ENCODE measurements at regions of chr7 and their contacts with region 1.

Region 1: GRCh38 chr7:150448789-150449147 is 1.7 kb upstream of the GIMAP8 start:
- DNase-seq: peak; percentile 94
- H3K4me3 Mint-ChIP-seq: peak overlapping the region; percentile 97
- H3K27ac Mint-ChIP-seq: peak overlapping the region; percentile 98
- H3K4me1 Mint-ChIP-seq: peaks cover 48% of the 10 kb centered on the region
- H3K27me3 Mint-ChIP-seq: no peaks in the 10 kb centered on the region

Region 2: GRCh38 chr7:150502519-150502918 is 53.8 kb after region 1 on chr7:
- CTCF ChIA-PET with region 1: interaction called, 12 read pairs
- POLR2A ChIA-PET with region 1: interaction called, 19 read pairs
- intact Hi-C with region 1: loop called (anchors 2 kb)
- DNase-seq: peak; percentile 62
- H3K4me3 Mint-ChIP-seq: peak overlapping the region; percentile 36
- H3K27ac Mint-ChIP-seq: peak overlapping the region; percentile 98
- H3K4me1 Mint-ChIP-seq: peaks cover 82% of the 10 kb centered on the region
- H3K27me3 Mint-ChIP-seq: no peaks in the 10 kb centered on the region

Region 3: DNA sequence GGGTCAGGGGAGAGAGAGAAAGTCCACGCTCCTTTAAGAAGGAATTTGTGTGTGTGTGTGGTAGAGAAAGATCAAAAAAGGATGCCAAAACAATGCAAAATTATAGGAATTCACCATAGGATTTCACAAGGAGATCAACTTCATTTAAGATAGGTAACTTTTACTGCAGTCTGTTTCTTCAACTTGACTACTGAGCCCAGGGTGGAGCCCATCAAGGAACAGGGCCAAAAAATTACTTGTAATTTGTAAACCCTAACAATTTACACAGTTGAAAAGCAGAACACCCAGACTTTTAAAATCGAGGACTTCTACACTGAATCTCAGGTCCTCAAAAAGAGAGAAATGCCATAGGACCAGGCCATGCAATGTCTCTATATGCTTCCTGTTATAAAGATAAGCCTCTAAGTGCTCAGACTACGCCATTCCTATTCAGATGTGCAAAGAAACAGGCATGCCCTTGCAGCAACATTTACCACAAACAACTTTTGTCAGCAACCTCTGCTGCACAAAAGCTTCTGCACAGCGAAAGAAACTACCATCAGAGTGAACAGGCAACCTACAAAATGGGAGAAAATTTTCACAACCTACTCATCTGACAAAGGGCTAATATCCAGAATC is 107.9 kb after region 1 on chr7:
- CTCF ChIA-PET with region 1: interaction called, 10 read pairs
- POLR2A ChIA-PET with region 1: interaction called, 3 read pairs
- intact Hi-C with region 1: no loop called
- DNase-seq: no peak
- H3K4me3 Mint-ChIP-seq: peak overlapping the region; percentile 58
- H3K27ac Mint-ChIP-seq: peak overlapping the region; percentile 83
- H3K4me1 Mint-ChIP-seq: peaks cover 78% of the 10 kb centered on the region
- H3K27me3 Mint-ChIP-seq: no peaks in the 10 kb centered on the region

Region 4: DNA sequence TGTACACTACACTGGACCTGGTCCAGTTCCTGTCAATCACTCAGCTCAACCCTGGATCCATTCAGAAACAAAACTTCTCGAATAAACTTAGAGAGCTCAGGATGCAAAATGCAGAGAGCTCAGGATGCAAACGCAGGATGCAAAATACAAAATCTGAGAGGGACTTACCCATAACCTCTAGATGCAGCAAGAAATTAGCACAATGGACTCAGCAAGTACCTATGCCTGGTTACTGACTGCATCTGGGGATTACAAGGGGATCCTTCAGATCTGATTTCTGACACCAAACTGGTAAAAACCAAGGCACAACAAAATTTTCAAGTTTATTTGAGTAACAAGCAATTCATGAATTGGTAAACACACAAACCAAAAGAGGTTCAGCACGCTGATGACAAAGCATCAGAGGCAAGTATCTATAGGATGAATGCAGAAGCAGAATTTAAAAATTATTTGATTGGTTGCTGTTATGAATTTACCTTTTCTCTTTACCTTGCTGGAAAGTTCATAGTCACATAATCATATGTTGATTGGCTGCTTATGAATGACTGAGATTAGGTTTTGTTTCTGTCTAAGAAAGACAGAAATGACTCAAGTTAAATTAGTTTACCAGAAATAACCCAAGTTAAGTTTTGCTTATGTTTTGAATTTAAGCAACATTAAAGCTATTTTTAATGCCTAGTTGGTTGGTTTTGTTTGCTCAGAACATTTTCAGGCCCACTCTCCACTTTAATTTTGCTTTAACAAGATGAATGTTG is 172.0 kb after region 1 on chr7:
- CTCF ChIA-PET with region 1: interaction called, 6 read pairs
- POLR2A ChIA-PET with region 1: no interaction called
- intact Hi-C with region 1: loop called (anchors 2 kb)
- DNase-seq: no peak
- H3K4me3 Mint-ChIP-seq: peak overlapping the region; percentile 29
- H3K27ac Mint-ChIP-seq: peak overlapping the region; percentile 95
- H3K4me1 Mint-ChIP-seq: peaks cover 56% of the 10 kb centered on the region
- H3K27me3 Mint-ChIP-seq: no peaks in the 10 kb centered on the region

Region 5: DNA sequence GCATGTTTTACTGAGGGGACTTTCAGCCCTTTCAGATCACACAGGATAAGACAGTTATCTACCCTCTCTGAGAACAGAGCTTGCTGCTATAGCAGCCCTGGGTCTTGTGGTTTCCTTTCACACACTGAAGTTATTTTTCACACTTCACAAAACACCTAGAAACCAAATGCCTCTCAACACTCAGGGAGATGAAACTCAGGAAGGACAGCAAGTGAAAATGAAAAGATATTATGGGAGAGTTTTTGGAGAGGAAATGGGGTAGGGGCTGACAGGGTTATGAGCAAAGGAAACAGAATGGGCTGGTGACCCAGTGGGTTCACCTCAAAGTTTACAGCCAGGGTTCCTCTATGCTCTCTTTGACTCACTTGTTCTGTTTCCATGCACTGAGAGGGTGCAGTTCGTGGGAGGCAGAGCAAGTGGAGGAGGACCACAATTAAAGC is 219.7 kb after region 1 on chr7:
- CTCF ChIA-PET with region 1: interaction called, 8 read pairs
- POLR2A ChIA-PET with region 1: interaction called, 3 read pairs
- intact Hi-C with region 1: loop called (anchors 1 kb)
- DNase-seq: peak; percentile 81
- H3K4me3 Mint-ChIP-seq: peak overlapping the region; percentile 18
- H3K27ac Mint-ChIP-seq: peak overlapping the region; percentile 98
- H3K4me1 Mint-ChIP-seq: peaks cover 82% of the 10 kb centered on the region
- H3K27me3 Mint-ChIP-seq: no peaks in the 10 kb centered on the region

Region 6: GRCh38 chr7:150716368-150716767 is 267.6 kb after region 1 on chr7 and contains the start of gene GIMAP1:
- CTCF ChIA-PET with region 1: interaction called, 14 read pairs
- POLR2A ChIA-PET with region 1: interaction called, 8 read pairs
- intact Hi-C with region 1: no loop called
- DNase-seq: peak; percentile 78
- H3K4me3 Mint-ChIP-seq: peak within 1 kb of the TSS; percentile 96
- H3K27ac Mint-ChIP-seq: peak within 1 kb of the TSS; percentile 92
- H3K4me1 Mint-ChIP-seq: peaks cover 50% of the 10 kb centered on the region
- H3K27me3 Mint-ChIP-seq: no peaks in the 10 kb centered on the region
- total RNA-seq, gene GIMAP1: 6.0 to 6.2 TPM

Region 7: DNA sequence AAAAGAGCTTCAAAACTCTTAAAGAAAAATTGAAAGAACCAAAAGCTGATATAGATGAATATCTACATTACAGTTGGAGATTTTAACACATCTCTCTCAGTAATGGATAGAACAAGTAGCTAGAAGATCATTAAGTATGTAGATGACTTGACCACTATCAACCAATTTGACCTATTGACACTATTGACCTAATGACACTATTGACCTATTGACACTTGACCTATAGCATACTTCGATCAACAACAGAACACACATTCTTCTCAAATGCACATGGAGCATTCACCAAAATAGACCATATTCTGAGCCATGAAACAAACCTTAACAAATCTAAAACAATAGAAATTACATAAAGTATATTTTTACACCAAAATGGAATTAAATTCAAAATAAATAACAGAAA is 310.7 kb after region 1 on chr7:
- CTCF ChIA-PET with region 1: interaction called, 80 read pairs
- POLR2A ChIA-PET with region 1: interaction called, 15 read pairs
- intact Hi-C with region 1: loop called (anchors 1 kb)
- DNase-seq: no peak
- H3K4me3 Mint-ChIP-seq: no peak overlapping the region
- H3K27ac Mint-ChIP-seq: no peak overlapping the region
- H3K4me1 Mint-ChIP-seq: peaks cover 31% of the 10 kb centered on the region
- H3K27me3 Mint-ChIP-seq: no peaks in the 10 kb centered on the region

Region 8: DNA sequence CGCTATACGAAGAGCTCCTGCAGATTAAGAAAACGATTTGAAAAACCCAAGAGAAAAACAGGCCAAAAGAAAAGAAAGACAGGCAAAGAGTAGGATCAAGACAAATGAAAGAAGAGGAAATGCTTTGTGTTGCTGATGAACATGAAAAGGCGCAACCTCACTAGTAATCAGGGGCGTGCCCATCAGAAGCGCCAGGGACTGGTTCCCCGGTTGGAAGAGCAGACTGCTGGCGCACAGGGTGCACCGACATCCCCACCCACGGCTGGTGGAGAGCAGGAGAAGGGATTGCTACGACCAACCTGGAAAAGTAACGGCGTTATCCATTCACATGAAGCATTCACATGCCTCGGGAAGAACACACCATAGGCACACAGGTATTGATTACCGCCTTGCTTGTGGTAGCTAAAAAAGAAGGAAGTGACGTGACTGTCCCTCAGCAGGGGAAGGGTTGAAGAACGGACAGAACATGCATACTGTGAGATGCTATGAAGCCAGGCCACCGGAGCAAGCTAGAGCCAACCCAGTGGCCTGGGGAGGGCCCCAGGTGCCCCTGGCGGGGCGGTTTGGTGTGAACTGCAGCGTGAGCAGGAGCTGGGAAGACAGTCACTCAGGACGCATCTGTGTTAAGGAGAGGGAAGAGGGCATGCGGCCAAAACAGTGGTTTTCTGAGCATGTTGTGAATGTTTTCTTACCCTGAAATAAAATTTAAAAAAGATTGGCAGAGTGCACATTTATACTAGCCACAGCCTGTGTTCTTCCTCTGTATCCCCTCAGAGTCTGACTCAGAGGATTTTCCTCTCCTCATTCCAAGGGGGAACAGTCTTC is 655.9 kb after region 1 on chr7:
- CTCF ChIA-PET with region 1: no interaction called
- POLR2A ChIA-PET with region 1: no interaction called
- intact Hi-C with region 1: no loop called
- DNase-seq: no peak
- H3K4me3 Mint-ChIP-seq: no peak overlapping the region
- H3K27ac Mint-ChIP-seq: no peak overlapping the region
- H3K4me1 Mint-ChIP-seq: no peaks in the 10 kb centered on the region
- H3K27me3 Mint-ChIP-seq: no peaks in the 10 kb centered on the region